GM10248 (cell line): ENCODE measurements at regions of chr2 and their contacts with region 1.

Region 1: DNA sequence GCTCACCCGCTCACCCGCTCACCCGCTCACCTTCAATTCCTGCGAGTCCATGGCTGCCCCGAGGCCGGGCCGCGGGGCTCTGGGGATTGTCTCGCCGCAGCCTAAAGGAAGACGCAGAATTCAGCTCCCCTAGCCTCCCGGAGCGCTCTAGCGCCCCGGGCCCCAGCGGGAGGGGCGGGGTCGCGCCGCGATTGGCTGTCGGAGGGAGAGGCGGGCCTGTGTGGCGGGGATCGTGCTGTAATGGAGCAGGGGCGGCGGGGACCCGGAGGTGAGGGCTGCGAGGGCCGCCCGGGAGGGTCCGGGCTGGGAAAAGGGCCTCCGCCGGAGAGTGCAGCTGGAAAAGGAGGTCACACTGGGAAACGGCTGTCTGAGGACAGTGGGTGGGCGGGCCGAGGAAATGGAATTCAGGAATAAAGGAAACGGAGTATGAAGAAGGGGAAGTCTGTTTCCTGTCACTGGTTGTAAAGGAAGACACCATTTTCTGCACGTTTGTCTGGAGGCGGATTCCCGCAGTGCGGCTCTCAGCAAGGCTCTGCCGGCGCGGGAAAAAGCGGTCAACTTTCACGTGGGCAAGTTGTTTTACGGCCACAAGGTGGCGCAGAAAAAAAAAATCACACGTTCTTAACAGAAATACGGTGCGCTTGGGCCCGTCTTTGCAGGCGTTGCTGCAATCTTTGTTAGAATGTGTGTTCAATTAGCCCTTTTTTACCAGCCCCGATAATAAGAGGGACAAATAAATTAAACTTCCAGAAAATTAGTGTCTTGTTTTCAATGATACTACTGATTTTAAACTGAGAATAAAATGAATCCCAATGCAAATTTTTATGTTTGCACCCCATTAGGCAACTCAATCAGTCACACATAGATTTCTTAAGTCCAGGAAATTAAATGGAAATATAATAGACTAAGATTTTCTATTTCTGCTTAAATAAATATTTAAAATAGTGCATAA is at the start of gene TTC21B:
- DNase-seq: peak; percentile 93
- CTCF ChIP-seq: peak; percentile 80

Region 2: DNA sequence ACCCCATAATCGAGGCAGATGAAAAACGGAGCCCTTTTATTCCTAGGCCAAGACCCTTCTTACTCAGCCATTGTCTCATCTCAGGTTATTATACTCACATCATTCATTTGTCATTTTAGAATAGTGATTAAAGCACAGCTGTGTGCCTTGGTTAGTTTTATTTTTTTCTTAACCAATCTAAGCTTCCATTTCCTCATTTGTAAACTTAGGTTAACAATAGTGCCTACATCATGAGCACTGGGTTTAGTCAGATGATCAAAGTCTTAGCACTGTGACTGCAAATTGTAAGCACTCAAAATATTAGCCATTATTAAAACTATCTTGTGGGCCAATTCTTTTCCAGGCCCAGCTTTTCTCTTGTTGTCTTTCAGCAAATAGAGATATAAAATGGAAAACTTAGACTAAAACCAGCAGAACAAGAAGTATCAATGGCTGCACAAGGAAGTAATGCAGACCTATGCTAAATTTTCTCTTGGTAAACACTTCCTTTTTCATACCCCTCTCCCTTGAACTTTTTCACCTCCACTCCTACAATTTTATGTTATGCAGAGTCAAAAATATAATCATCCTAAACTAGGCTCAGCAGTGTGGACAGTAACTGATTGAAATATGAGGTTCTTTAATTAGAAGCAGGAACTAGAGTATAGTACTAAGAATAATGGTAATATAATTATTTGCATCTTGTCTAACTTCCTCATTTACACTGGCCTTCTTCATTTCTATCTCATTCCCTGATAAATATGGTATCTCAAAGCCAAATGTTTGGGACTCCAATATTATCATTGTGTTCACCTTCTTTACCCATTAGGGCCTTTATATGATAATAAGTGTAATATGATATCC is 138.4 kb before region 1 on chr2:
- CTCF ChIA-PET with region 1: no interaction called
- POLR2A ChIA-PET with region 1: no interaction called
- DNase-seq: no peak
- CTCF ChIP-seq: no peak

Region 3: GRCh38 chr2:165941827-165942226 is 12.1 kb before region 1 on chr2:
- CTCF ChIA-PET with region 1: interaction called, 15 read pairs
- POLR2A ChIA-PET with region 1: no interaction called
- DNase-seq: no peak
- CTCF ChIP-seq: no peak